HEK293 (cell line): ENCODE measurements at regions of chr1 and their contacts with region 1.

Region 1: GRCh38 chr1:154863315-154864174 is 6.5 kb downstream of the KCNN3 start:
- H3K4me3 ChIP-seq: no peak overlapping the region
- H3K27ac ChIP-seq: no peak overlapping the region
- H3K4me1 ChIP-seq: no peaks in the 10 kb centered on the region
- CTCF ChIP-seq: peak; percentile 41

Region 2: DNA sequence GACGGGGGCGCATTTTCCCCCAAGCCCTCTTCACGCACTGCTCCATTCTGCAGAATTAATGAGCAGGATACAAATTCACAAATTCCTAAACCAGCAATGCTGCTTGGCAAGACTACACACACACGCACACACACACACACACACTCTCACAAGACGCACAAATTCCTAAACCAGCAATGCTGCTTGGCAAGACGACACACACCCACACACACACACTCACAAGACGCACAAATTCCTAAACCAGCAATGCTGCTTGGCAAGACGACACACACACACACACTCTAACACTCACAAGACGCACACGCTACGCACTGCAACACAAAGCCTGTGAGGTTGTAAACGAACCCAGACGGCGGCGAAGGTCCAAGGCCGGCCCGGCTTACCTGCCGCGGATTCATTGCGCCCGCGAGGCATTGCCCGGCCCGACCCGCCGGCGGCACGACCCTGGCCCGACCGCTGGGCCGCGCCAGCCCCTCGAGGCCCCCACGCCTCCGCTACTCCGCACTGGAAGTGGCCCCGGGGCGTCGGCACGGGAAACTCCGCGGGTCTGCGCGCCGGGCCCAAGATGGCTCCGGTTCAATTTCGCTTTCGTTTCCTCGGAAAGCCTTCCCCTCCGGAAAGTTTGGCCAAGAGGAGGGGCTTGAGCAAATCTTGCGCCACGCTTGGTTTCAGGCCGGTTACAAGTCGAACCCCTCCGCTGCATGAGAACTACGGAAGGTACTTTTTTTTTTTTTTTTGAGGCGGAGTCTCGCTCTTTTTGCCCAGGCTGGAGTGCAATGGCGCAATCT is 255.7 kb before region 1 on chr1 and contains the start of gene ADAR:
- CTCF ChIA-PET with region 1: no interaction called
- POLR2A ChIA-PET with region 1: interaction called, 11 read pairs
- H3K4me3 ChIP-seq: peak within 1 kb of the TSS; percentile 58
- H3K27ac ChIP-seq: peak within 1 kb of the TSS; percentile 93
- H3K4me1 ChIP-seq: peaks cover 18% of the 10 kb centered on the region; the same call in 1 of the 2 replicates
- CTCF ChIP-seq: peak; percentile 33; the same call in 1 of the 2 replicates

Region 3: GRCh38 chr1:154847891-154848290 is 15.7 kb before region 1 on chr1:
- CTCF ChIA-PET with region 1: interaction called, 12 read pairs
- POLR2A ChIA-PET with region 1: no interaction called
- H3K4me3 ChIP-seq: no peak overlapping the region
- H3K27ac ChIP-seq: no peak overlapping the region
- H3K4me1 ChIP-seq: no peaks in the 10 kb centered on the region
- CTCF ChIP-seq: no peak